ENCODE measurements at regions of chr12 and their contacts with region 1.

Region 1: DNA sequence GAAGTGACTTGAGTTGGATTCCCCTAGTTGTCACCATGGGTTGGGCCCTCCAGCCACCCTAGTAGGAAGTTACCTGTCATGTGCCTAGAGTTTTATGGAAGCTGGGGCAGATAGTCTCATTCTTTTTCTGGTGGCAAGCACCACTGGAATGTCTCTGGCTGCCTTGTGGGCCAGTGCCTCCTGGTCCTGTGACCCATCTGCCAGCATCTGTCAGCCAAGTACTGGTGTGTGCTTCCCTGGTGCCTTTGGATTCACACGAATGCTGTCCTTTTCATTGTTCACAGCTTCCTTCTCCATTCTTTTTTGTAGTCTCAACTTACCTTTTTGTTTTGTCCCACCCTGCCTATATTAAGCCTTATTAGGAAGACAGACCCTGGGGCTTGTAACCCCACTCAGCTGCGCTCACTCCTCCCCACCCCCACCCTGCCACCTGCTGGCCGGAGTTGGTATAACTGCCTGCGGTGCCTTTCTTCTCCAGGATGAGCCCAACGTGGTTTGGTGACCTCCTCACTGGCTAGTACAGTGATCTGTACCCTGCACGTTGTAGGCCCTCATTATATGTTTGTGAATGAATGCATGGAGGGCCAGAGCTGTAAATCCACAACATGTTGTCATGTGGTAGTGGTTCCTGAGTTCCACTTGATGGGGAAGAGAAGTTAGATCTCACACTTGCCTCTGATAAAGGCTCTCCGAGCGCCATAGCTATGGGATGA is 125.7 kb downstream of the TSPAN9 start:
- DNase-seq: peak; percentile 54
- H3K4me3 Mint-ChIP-seq: no peak overlapping the region
- H3K27ac Mint-ChIP-seq: no peak overlapping the region
- H3K4me1 Mint-ChIP-seq: peaks cover 11% of the 10 kb centered on the region
- H3K27me3 Mint-ChIP-seq: no peaks in the 10 kb centered on the region
- CTCF ChIP-seq: peak; percentile 93

Region 2: DNA sequence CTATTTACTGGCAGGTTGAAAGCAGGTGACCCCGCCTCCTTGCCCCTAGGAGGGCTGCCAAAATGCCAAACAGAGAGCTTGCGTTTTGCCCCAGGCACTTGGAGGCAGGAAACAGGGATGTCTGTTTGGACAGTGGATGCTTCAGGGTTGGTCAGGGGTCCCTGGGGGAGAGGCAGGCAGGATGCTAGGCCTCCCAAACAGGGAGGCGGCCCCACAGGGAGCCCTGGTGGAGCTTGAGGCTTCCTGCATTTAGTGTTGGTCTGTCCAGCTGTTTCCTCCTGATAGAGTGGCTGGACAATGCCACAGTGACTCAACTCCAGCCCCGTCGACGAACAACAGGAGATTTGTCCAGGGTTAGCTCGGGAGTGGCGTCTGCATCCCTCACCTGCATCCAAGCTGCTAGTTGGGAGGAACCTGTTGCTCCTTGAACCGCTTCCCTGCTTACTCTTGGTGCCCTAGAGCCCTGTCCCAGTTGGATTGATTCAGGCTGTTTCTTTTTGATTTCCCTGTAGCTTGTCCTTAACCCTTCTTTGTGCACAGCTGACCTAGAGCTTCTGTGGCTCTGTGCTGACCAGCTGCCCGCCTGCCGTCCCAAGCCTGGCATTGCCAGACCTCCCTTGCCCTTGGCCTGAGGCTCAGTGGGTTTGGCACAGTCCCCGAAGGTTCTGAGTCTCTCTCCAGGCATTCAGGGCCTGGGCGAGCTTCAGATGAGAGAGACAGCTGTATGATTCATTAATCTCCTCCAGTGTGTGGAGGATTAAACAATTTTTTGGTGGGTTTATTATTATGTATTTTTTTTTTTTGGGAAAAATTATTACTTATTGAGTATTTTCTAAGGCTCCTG is 79.8 kb before region 1 on chr12:
- CTCF ChIA-PET with region 1: interaction called, 19 read pairs
- POLR2A ChIA-PET with region 1: interaction called, 3 read pairs
- intact Hi-C with region 1: no loop called
- DNase-seq: peak; percentile 89
- H3K4me3 Mint-ChIP-seq: no peak overlapping the region
- H3K27ac Mint-ChIP-seq: peak overlapping the region; percentile 33
- H3K4me1 Mint-ChIP-seq: peaks cover 33% of the 10 kb centered on the region
- H3K27me3 Mint-ChIP-seq: no peaks in the 10 kb centered on the region
- CTCF ChIP-seq: no peak

Region 3: DNA sequence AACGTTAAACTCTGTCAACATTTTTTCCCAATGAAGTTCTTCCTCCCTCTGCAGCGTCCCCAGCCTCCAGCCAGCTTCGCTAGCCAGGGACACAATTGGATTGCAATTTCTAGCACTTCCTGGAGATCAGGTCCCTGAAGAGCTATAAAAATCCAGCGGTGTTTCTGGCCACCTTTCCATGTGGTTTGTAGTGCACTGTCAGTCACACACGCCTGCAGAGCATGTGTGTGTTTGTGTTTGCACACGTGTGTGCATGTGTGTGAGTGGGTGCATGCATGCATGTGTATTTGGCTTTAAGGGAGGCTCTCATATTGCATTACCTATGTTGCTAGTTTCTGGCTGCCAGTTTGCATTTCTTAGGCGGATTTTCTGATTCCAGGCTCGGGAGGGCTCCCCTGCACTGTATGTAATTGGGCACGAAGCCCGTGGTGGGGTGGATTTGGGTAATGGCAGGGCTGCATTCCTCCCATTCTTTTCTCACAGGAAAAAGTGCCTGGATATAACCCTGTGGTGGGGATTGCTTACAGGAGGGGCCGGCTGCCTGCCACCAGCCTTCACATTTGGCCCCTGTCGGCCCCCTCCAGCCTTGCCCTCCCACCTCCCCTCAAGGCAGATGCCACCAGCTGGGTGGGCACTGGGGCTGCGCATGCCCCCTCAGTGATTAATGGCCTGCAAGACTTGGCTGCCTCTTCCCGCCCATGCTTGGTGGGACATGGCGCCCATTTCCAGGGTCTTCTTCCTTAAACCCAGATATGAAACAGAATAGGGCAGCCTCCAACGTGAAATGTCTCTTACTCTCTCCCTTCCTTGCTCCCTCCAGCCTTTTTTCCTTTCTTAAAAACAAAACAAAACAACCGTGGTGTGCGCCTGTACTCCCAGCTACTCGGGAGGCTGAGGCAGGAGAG is 51.7 kb before region 1 on chr12:
- CTCF ChIA-PET with region 1: interaction called, 10 read pairs
- POLR2A ChIA-PET with region 1: no interaction called
- intact Hi-C with region 1: no loop called
- DNase-seq: no peak
- H3K4me3 Mint-ChIP-seq: no peak overlapping the region
- H3K27ac Mint-ChIP-seq: no peak overlapping the region
- H3K4me1 Mint-ChIP-seq: no peaks in the 10 kb centered on the region
- H3K27me3 Mint-ChIP-seq: no peaks in the 10 kb centered on the region
- CTCF ChIP-seq: no peak

Region 4: GRCh38 chr12:3177778-3178425 is 25.0 kb before region 1 on chr12:
- CTCF ChIA-PET with region 1: interaction called, 11 read pairs
- POLR2A ChIA-PET with region 1: no interaction called
- intact Hi-C with region 1: no loop called
- DNase-seq: no peak
- H3K4me3 Mint-ChIP-seq: no peak overlapping the region
- H3K27ac Mint-ChIP-seq: no peak overlapping the region
- H3K4me1 Mint-ChIP-seq: peaks cover 14% of the 10 kb centered on the region
- H3K27me3 Mint-ChIP-seq: no peaks in the 10 kb centered on the region
- CTCF ChIP-seq: no peak

Region 5: DNA sequence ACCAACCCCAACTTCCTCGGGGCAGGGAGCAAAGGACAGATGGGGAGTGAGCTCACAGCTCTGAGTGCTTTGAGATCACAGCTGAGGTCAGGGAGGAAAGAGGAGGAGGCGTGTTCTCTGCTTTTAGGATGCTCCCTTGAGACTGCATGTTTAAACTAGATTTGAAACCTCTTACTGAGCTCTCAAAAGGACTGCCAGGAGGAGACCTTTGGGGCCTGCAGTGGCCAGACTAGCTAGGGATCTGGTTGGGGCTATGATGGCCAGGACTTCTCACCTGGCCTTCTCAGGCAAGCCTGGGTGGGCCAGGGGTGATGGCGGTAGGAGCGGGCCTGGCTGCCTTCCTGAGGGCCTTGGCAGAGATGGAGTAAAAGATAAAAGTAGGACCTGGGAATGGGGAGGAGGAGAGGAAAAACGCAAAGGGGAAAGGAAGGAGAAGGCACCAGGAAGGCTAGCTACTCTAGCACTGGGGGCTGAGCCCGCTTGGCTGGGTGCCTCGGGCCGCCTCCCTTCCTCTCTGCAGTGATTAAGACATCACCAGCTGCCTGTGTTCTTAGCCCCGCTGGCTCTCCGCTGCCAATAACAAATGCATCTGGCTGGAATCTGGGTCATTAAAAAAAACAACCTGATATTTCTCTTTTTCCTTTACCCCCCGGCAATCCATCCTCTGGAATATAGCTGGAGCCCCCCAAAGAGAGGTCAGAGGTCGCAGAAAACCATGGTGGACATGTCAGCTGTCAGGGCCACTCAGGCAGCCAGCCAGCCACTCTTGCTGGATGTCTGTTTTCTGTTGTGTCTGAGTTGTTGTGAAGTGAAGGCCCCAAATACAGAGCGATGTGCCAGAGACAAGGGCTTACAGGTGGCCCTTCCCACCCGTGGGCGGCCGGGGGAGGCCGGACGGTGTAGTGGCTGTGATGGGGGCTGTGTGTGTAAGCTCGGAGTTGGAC is 15.6 kb after region 1 on chr12:
- CTCF ChIA-PET with region 1: interaction called, 19 read pairs
- POLR2A ChIA-PET with region 1: interaction called, 3 read pairs
- intact Hi-C with region 1: loop called (anchors 1 kb)
- DNase-seq: peak; percentile 87
- H3K4me3 Mint-ChIP-seq: peak overlapping the region; percentile 2
- H3K27ac Mint-ChIP-seq: peak overlapping the region; percentile 95
- H3K4me1 Mint-ChIP-seq: peaks cover 28% of the 10 kb centered on the region
- H3K27me3 Mint-ChIP-seq: no peaks in the 10 kb centered on the region
- CTCF ChIP-seq: no peak